Calu3 (cell line): ENCODE measurements at regions of chr14 and their contacts with region 1.

Region 1: GRCh38 chr14:70821584-70822529 is 12.5 kb upstream of the MAP3K9 start:
- DNase-seq: peak; percentile 36
- H3K4me3 Mint-ChIP-seq: peak overlapping the region; percentile 70
- H3K27ac Mint-ChIP-seq: no peak overlapping the region
- H3K4me1 Mint-ChIP-seq: peaks cover 9% of the 10 kb centered on the region
- H3K27me3 Mint-ChIP-seq: peaks cover 37% of the 10 kb centered on the region
- CTCF ChIP-seq: no peak

Region 2: DNA sequence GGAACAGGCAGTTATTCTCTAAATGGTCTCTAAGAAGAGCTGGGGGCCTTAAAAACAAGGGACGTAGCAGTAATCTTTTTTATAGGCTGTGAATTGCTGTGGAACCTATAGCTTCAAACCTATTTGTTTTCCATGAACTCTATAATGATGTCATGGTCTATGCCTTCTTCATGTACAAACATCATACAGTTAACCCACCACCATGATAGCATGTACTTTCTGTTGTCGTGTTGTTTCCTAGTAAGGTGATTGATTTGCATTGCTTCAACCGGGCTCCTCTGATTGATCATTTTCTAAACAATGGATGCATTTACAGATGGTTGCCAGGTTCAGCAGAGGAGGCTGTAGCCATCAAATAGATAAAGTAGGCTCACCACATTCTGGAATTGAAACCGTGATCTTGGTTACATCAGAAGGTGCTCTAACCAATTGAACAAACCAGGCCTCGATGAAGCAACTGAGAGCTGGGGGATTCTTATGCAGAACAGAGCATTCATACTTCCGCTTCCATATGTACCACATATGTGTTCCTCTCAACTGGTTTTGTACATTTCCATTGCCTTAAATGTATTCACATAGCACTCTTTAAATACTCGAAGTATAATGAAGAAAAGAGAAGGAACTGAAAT is 59.8 kb after region 1 on chr14:
- CTCF ChIA-PET with region 1: interaction called, 13 read pairs
- intact Hi-C with region 1: no loop called
- DNase-seq: no peak
- H3K4me3 Mint-ChIP-seq: no peak overlapping the region
- H3K27ac Mint-ChIP-seq: no peak overlapping the region
- H3K4me1 Mint-ChIP-seq: no peaks in the 10 kb centered on the region
- H3K27me3 Mint-ChIP-seq: peaks cover 9% of the 10 kb centered on the region
- CTCF ChIP-seq: no peak